Thyroid gland (tissue), 4 donors: ENCODE measurements at regions of chr2 and their contacts with region 1.

Region 1: DNA sequence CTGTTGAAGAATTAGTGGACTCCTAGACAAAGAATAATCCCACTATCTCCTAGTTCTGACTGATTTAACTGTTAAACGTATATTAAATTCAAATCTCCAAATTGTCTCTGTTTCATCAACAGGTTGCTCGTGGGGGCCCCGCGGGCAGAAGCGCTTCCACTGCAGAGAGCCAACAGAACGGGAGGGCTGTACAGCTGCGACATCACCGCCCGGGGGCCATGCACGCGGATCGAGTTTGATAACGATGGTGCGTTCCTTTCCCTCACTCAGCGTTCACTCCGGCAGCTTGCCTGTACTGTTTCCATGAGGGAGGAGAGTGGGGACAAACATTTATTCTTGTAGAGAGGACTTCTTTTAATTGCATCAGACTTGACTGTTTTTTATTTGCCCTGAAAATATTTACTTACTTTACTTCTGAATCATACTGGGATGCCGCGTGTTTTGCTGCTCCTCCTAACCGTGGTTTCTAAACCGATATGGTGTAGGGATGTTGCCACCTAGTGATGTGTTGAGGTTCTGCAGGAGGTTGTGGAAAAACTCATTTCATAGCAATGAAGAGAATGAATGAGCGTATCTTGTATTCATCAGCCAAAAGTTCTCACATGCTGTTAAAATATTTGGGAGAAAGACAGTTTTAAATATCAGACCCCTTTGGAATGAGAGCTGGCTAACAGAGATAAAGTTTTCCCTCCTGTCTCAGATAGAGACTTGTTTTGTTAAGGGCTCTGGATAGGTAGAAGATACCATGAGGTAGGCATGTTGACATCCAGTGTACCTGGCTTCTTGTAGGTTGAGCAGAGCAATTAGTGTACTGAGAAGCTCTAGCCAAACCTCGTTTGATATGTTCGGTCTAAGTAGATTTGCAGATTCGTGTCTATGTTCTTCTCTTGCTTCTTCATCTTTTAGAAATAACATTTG is 38.3 kb downstream of the ITGA6 start:
- DNase-seq: peak; percentile 61 to 66
- H3K4me3 ChIP-seq: no peak overlapping the region
- H3K27ac ChIP-seq: no peak overlapping the region
- H3K4me1 ChIP-seq: peaks cover 9 to 22% of the 10 kb centered on the region in 2 donors
- H3K27me3 ChIP-seq: no peaks in the 10 kb centered on the region
- CTCF ChIP-seq: peak; percentile 50 to 88 (median 78)
- POLR2A ChIP-seq: no peak

Region 2: GRCh38 chr2:172172513-172173173 is 293.0 kb before region 1 on chr2:
- intact Hi-C with region 1: loop called (anchors 2 kb)
- DNase-seq: peak; percentile 73 to 75
- H3K4me3 ChIP-seq: peak overlapping the region in 2 of 3 donors; percentile 23 to 28
- H3K27ac ChIP-seq: no peak overlapping the region
- H3K4me1 ChIP-seq: peaks cover 0 to 8% of the 10 kb centered on the region in 2 donors
- H3K27me3 ChIP-seq: no peaks in the 10 kb centered on the region
- CTCF ChIP-seq: peak; percentile 65 to 98 (median 83)
- POLR2A ChIP-seq: no peak